Sciatic nerve (tissue), 2 donors: ENCODE measurements at regions of chr15 and their contacts with region 1.

Region 1: DNA sequence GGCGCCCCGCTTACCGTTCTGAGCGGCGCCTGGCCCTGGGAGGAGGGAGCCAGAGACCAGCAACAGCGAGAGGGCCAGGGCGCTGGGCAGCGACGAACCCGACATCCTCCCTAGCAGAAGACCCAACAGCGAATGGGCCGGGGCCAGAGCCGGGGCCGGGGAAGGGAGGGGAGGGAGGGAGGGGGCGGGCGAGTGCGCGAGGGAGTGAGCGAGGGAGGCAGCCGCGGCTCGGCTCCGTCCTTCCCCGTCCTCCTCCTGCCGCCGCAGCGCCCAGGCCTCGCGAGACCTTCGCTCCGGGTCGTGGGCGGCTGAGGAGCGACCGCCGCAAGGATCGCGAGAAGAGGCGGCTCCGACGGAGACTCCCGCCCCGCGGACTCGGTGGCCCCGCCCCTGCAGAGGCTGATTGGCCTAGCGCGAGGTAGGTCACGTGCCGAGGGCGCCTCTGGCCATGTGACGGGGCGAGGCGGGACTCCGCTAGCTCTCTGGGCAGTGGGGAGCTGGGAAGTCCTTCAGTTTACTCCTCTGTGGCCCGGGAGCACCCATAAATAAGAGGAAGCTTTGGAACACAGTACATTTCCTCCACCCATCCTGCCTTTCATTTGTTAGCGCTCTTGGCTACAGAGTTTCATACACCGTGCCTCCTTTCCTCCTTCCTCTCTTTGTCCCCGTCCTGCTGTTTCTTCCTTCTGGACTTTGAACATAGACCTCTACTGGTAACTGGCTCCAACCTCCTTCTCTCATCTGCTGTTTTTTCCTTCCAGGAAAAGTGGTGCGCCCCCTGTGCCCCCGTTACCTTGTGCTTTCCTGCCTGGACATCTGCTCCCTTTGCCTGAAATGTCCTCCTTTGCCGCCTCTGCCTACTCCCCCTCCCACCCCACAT is at the start of gene NPTN:
- DNase-seq: peak; percentile 100
- ATAC-seq: peak; percentile 98
- total RNA-seq, gene NPTN: 85.5 TPM

Region 2: DNA sequence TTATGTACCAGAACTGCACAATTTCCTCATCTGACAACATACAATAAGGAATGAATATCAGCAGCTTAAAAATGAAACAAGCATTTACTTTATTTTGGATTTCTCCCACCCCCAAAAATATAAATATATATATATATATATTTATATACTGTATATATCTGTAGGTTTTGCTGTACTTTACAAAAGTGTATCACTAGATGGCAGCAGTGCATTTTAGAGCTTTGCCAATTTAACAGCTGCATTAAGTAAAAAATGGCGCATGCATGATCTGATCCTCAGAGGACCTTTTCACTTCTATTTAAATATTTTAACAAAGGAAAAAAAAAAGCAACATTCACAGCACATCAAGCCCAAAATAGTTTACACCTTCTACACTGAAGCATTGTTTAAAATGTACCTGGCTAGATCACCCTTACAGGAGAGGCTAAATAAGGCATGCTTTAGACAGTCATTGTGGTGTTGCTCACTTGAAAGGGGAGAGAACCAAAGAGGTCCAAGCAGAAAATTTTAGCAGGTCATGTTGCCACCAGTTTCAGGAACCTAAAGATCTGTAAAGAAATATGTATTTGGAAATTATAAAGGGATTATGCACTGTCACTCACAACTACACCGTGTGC is 72.7 kb before region 1 on chr15:
- intact Hi-C with region 1: loop called (anchors 10 kb)
- DNase-seq: no peak
- ATAC-seq: no peak

Region 3: DNA sequence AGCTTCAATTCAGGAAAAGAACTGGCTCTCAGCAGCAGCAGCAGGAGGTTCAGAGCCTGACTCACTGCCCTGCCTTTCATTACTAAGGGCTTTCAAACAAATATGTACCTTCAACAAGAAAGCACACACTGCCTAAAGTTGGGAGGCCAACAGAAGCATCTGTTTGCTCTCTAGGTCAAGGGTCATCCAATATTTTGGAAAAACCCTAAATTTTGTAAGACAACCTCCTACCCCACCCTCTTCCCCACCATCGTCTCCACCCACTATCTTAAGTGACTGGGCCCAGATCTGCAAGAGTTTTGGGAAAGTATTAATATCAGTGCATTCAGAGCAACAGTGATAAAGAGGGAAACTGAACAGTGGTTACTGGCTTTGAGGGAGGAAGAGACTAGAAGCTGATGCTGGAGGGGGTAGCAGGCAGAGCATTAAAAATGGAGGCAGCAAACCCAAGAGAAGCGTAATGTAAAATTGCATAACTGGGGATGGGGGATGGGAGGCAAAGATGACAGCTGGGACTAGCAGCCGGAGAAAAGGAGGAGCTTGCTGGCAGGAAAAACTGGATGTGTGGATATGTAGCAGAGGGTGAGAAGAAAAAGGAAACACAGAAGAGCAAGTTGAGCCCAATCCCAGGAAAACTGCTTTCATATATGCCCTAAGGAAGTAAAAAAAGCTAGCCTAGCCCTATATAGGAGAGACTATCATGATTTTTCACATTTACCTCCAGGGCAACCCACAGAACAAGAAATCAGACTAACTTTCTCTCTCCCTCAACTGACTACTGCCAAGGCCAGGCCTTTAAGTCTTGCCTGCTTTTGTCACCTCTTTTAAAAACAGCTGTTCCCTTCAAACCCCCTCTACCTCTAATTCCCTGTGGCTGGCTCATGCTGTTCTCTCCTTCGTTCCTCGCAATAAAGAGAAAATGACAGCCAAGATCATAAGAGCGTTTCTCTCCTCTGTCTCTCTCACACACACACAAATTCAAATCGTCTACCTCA is 31.6 kb before region 1 on chr15:
- intact Hi-C with region 1: no loop called
- DNase-seq: no peak
- ATAC-seq: peak; percentile 91